ENCODE measurements at regions of chr1 and their contacts with region 1.

Region 1: DNA sequence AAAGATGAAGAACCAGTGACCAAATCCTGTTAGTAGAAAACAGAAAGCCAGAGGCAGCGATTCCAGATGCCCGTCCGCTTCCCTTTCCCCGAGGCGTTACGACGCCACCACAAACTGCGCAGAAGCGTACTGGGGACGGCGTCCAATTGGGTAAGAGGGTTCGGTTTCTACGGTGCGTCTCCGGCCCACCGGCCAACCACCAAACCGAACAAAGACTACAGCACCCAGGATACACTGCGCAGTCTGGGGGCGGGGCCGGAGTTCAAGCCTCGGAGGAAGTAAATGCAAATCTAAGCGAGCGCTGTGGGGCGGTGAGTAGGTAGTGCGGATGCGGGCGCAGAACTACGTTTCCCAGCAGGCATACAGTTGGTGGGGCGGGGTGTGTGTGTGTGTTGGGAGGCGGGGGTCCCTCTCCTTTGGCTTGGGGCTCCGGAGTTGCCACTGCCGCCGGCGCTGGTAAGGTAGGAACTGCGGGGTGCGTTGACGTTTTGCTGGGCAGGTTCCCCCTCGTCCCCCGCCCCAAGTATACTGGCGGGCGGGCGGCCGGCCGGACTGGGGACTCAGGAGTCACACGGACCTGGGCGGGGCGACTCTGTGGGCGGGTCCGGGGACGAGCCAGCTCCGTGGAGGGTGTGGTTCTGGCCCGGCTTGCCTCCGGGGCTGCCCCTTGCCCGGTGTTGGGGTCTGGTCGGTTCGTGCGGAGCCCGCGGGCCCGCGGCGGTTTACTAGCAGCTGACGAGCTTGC is at the starts of genes SWT1 and TRMT1L:
- DNase-seq: peak; percentile 98
- H3K4me3 Mint-ChIP-seq: peak within 1 kb of the TSS; percentile 95
- H3K27ac Mint-ChIP-seq: peak within 1 kb of the TSS; percentile 95
- H3K4me1 Mint-ChIP-seq: peaks cover 52% of the 10 kb centered on the region
- H3K27me3 Mint-ChIP-seq: no peaks in the 10 kb centered on the region
- total RNA-seq, gene SWT1: 2.1 and 2.7 TPM in 2 replicates
- total RNA-seq, gene TRMT1L: 25.9 and 28.7 TPM in 2 replicates

Region 2: DNA sequence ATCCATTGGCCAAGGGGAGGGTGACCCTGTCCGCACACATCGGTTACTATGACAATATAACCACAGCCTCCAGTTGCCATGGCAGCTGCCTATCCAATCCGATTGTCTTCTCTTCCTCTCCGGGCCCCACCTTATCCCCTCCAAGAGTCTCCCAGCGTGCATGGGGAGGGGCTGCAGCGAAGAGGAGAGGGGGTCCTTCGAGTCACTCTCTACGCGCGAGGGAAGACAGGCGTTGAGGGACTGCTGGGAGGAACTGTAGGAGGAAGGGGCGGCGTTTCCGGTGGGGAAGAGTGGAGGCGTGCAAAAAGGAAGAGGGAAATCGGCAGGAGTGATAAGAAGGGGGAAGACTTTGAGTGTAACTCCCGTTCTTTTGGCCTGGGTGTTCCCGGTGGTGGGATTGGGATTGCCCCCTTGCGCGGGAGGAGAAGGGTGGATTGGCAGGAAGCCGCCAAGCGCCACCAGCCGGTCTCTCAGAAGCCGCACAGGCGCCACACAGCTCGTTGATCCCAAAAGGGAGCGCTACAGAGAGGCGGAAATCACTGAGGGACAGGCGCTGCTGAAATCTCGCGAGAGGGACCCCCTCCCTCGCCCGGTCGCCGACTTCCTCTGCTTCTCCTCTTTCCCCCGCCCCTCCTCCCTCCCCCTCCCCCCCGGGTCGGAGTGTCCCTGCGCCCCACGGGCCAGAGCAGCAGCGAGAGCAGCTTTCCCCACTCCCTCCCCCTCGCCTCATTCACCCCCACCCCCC is 1685.1 kb before region 1 on chr1:
- intact Hi-C with region 1: loop called (anchors 2 kb)
- DNase-seq: peak; percentile 92
- H3K4me3 Mint-ChIP-seq: peak overlapping the region; percentile 87
- H3K27ac Mint-ChIP-seq: peak overlapping the region; percentile 99
- H3K4me1 Mint-ChIP-seq: peaks cover 24% of the 10 kb centered on the region
- H3K27me3 Mint-ChIP-seq: no peaks in the 10 kb centered on the region

Region 3: GRCh38 chr1:184892116-184892515 is 264.9 kb before region 1 on chr1:
- intact Hi-C with region 1: loop called (anchors 5 kb)
- DNase-seq: no peak
- H3K4me3 Mint-ChIP-seq: no peak overlapping the region
- H3K27ac Mint-ChIP-seq: peak overlapping the region; percentile 85
- H3K4me1 Mint-ChIP-seq: peaks cover 41% of the 10 kb centered on the region
- H3K27me3 Mint-ChIP-seq: no peaks in the 10 kb centered on the region

Region 4: GRCh38 chr1:185044981-185045813 is 111.8 kb before region 1 on chr1 and contains the start of gene RNF2:
- intact Hi-C with region 1: loop called (anchors 1 kb)
- DNase-seq: peak; percentile 67
- H3K4me3 Mint-ChIP-seq: peak within 1 kb of the TSS; percentile 87
- H3K27ac Mint-ChIP-seq: peak within 1 kb of the TSS; percentile 80
- H3K4me1 Mint-ChIP-seq: peaks cover 21% of the 10 kb centered on the region
- H3K27me3 Mint-ChIP-seq: peaks cover 13% of the 10 kb centered on the region
- total RNA-seq, gene RNF2: 25.7 and 30.6 TPM in 2 replicates

Region 5: DNA sequence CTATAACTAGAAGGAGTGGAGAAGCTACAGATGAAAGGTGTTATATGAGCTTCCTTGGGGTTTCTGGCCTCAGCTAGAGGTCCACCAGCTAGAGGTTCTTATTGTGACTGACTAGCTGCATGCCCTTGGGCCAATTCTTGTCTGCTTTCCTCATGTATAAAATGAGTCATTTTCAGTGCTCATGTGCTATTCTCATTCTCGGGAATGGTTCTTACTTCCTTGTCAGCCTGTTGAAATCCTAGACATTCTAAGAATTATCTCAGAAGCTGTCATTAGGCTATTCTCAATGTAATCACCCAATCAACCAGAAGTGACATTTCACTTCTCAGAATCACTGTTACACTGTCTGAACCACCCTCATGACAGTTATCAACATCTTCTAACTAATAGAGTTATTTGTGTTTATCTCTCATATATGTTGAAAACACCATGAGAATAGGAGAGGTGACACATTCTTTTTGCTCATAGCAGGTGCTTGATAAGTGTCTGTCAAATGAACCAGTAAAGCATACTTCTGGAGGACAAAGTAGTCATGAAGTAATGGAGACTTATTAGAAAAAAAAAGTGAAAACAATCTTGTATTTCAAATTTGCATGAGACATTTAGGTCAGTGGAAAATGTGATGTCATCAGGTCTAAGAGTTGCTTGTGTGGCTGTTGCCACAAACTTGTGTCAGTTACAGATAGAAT is 282.8 kb after region 1 on chr1:
- intact Hi-C with region 1: loop called (anchors 5 kb)
- DNase-seq: peak; percentile 44
- H3K4me3 Mint-ChIP-seq: no peak overlapping the region
- H3K27ac Mint-ChIP-seq: no peak overlapping the region
- H3K4me1 Mint-ChIP-seq: peaks cover 19% of the 10 kb centered on the region
- H3K27me3 Mint-ChIP-seq: no peaks in the 10 kb centered on the region

Region 6: DNA sequence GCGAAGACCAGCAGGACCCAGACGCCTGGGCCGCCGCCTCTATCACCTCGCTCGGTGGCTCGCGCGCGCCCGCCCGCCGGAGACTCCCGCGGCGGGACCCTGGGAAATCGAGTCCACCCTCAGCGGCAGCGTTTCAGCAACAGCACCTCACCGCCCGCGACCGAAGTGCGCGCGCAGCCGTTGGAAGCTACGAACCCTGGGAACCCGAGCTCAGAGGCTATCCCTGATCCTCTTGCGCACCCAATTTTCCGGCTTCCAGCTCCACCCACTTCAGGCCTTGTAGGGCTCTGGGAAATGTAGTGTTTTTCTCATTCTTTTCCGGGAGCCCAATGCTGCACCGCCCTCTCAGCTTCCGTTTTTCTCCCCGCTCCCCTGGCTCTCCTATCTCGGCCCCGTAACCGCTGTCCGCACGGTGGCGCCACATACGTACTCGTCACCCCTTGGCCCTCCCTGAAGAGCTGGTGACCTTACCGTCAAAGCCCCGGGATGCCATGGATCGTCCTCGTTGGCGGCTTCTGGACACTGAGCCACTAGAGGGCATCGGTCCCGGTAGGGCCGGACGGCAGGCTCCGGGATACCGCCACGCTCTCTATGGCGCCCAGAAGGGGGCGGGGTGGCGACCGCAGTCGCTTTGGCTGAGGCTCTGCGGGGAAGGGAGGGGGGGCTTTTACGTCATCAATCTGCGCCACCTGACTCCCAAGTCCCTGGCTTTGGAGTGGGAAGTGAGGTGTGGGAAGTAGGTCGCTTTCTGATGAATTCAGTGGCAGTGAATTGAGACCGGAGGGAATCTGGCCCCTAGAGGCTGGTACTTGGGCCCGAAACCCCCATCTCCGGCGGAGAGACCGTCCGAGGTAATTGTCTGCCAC is 1218.3 kb after region 1 on chr1 and contains the starts of genes ODR4 and TPR:
- intact Hi-C with region 1: loop called (anchors 1 kb)
- DNase-seq: peak; percentile 97
- H3K4me3 Mint-ChIP-seq: peak within 1 kb of the TSS; percentile 96
- H3K27ac Mint-ChIP-seq: peak within 1 kb of the TSS; percentile 97
- H3K4me1 Mint-ChIP-seq: peaks cover 31% of the 10 kb centered on the region
- H3K27me3 Mint-ChIP-seq: no peaks in the 10 kb centered on the region
- total RNA-seq, gene ODR4: 16.1 and 17.0 TPM in 2 replicates
- total RNA-seq, gene TPR: 154 and 160 TPM in 2 replicates